ENCODE measurements at regions of chr11 and their contacts with region 1.

Region 1: DNA sequence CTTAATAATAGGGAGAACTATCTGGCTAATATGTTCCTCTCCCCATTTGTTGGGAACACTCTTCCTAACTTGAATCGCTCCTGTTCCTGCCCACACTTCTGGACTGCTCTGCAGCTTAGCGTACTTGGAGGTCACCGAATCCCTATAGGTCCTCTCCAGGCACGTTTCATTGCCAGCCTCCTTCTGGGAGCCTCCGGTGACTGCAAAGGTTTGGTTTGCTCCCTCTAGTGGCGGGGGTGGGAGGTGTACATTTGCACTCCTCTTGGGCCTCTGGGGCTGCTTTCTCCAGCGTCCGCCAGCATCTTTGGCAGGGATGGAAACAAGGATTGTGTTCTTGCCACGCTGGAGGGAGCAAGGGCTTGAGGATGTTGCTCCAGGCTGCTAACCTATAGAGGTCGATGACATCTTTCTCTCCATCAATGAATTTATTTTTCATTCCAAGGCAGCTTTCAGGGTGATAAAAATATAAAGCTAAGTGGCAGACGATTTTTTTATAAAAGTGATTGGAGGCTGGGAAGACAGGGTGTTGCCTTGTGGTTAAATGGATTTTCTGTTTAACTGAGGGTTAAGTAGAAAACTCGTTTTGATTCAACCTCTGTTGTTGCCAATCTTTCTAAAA is 48.7 kb downstream of the TSPAN18 start:
- DNase-seq: no peak
- H3K4me3 ChIP-seq: no peak overlapping the region
- H3K27ac ChIP-seq: peak overlapping the region; percentile 78 to 85 (median 80)
- H3K4me1 ChIP-seq: peaks cover 58 to 89% (median 83%) of the 10 kb centered on the region in 4 donors
- H3K27me3 ChIP-seq: no peaks in the 10 kb centered on the region
- CTCF ChIP-seq: peak; percentile 66 to 80 (median 74)
- EP300 ChIP-seq: no peak
- POLR2A ChIP-seq: no peak

Region 2: GRCh38 chr11:44893846-44894617 is 118.6 kb after region 1 on chr11:
- intact Hi-C with region 1: loop called (anchors 5 kb)
- DNase-seq: no peak
- H3K4me3 ChIP-seq: peak overlapping the region in 2 of 4 donors; percentile 16 to 37
- H3K27ac ChIP-seq: peak overlapping the region; percentile 78 to 86 (median 86)
- H3K4me1 ChIP-seq: peaks cover 17 to 50% (median 39%) of the 10 kb centered on the region in 4 donors
- H3K27me3 ChIP-seq: no peaks in the 10 kb centered on the region
- CTCF ChIP-seq: peak in 2 of 3 experiments; percentile 88 to 95
- EP300 ChIP-seq: no peak
- POLR2A ChIP-seq: no peak